IMR-90 (cell line): ENCODE measurements at regions of chr1 and their contacts with region 1.

Region 1: GRCh38 chr1:11301601-11302000 is 28.6 kb downstream of the UBIAD1 start:
- DNase-seq: no peak
- ATAC-seq: no peak
- H3K4me3 ChIP-seq: no peak overlapping the region
- H3K27ac ChIP-seq: no peak overlapping the region
- H3K4me1 ChIP-seq: no peaks in the 10 kb centered on the region
- H3K27me3 ChIP-seq: no peaks in the 10 kb centered on the region; the same call in 1 of the 2 replicates
- CTCF ChIP-seq: no peak
- POLR2A ChIP-seq: no peak
- RAD21 ChIP-seq: no peak

Region 2: GRCh38 chr1:11059990-11060830 is 241.4 kb before region 1 on chr1 and contains the start of gene SRM:
- CTCF ChIA-PET with region 1: no interaction called
- POLR2A ChIA-PET with region 1: interaction called, 14 read pairs
- dilution Hi-C with region 1: no loop called
- in situ Hi-C with region 1: no loop called
- intact Hi-C with region 1: no loop called
- DNase-seq: peak; percentile 87
- ATAC-seq: peak; percentile 98
- H3K4me3 ChIP-seq: peak within 1 kb of the TSS; percentile 93
- H3K27ac ChIP-seq: peak within 1 kb of the TSS; percentile 70
- H3K4me1 ChIP-seq: peaks cover 8% of the 10 kb centered on the region
- H3K27me3 ChIP-seq: no peaks in the 10 kb centered on the region
- CTCF ChIP-seq: peak; percentile 43
- POLR2A ChIP-seq: no peak
- RAD21 ChIP-seq: no peak
- total RNA-seq, gene SRM: 23.1 and 25.6 TPM in 2 replicates

Region 3: GRCh38 chr1:11272832-11273594 is 28.6 kb before region 1 on chr1 and contains the start of gene UBIAD1:
- CTCF ChIA-PET with region 1: no interaction called
- POLR2A ChIA-PET with region 1: no interaction called
- dilution Hi-C with region 1: no loop called
- in situ Hi-C with region 1: no loop called
- intact Hi-C with region 1: no loop called
- DNase-seq: peak; percentile 82
- ATAC-seq: peak; percentile 93
- H3K4me3 ChIP-seq: peak within 1 kb of the TSS; percentile 89
- H3K27ac ChIP-seq: peak within 1 kb of the TSS; percentile 91
- H3K4me1 ChIP-seq: peaks cover 7% of the 10 kb centered on the region; the same call in 1 of the 2 replicates
- H3K27me3 ChIP-seq: no peaks in the 10 kb centered on the region
- CTCF ChIP-seq: peak; percentile 24; the same call in 1 of the 2 replicates
- POLR2A ChIP-seq: peak; percentile 84
- RAD21 ChIP-seq: no peak
- total RNA-seq, gene UBIAD1: 4.7 and 6.3 TPM in 2 replicates